ENCODE measurements at regions of chr6 and their contacts with region 1.

Region 1: DNA sequence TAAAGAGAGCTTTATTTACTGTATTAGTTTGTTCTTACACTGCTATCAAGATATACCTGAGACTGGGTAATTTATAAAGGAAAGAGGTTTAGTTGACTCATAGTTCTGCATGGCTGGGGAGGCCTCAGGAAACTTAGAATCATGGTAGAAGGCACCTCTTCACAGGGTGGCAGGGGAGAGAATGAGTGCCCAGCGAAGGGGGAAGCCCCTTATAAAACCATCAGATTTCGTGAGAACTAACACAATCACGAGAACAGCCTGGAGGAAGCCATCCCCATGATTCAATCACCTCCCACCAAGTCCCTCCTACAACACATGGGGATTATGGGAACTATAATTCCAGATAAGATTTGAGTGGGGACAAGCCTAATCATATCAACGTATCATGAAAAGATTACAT is 27.2 kb downstream of the ARID1B start:
- DNase-seq: no peak
- H3K4me3 ChIP-seq: no peak overlapping the region
- H3K27ac ChIP-seq: no peak overlapping the region
- H3K4me1 ChIP-seq: peaks cover 43% of the 10 kb centered on the region
- CTCF ChIP-seq: no peak

Region 2: GRCh38 chr6:156791320-156791850 is 13.0 kb before region 1 on chr6:
- CTCF ChIA-PET with region 1: no interaction called
- POLR2A ChIA-PET with region 1: interaction called, 15 read pairs
- intact Hi-C with region 1: no loop called
- DNase-seq: peak; percentile 80
- H3K4me3 ChIP-seq: peak overlapping the region; percentile 32
- H3K27ac ChIP-seq: peak overlapping the region; percentile 7
- H3K4me1 ChIP-seq: peaks cover 91% of the 10 kb centered on the region
- CTCF ChIP-seq: no peak